Calu3 (cell line): ENCODE measurements at regions of chr22 and their contacts with region 1.

Region 1: DNA sequence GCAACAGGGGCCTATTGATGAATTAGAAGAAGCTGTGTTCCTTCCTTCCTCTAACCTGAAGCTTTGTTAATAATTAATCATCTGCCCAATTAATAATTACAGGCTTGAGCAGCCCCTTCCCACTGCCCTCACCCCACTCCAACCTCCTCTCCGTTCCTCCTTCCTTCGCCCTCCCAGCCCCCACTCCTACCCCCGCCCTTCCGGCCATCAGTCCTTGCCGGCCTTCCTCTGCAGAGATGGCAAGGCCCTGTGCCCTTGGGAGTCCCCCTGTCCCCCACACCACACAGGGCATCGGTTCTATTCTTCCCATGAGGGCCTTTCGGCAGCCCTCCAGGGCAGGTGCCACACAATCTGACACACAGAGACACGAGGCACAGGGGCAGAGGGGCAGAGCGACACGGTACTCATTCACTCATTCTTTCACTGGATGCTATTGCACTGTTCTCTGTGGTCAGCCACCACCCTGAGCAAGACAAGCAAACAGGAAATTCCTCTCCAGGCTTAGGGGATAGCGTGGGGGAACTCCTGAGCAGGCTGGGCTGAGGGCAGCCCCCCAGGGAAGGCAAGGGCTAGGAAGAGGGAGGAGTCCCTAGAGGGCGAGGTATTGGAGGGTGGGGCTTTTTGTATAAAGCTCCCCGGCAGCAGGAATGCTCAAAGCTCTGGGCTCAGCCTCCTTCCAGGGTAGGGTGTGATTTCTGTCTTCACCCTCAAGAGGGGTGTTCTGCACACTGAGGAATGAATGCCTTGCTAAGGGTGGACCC is 14.7 kb downstream of the MGAT3 start:
- DNase-seq: peak; percentile 85
- H3K4me3 Mint-ChIP-seq: peak overlapping the region; percentile 85
- H3K27ac Mint-ChIP-seq: peak overlapping the region; percentile 92
- H3K4me1 Mint-ChIP-seq: peaks cover 67% of the 10 kb centered on the region
- H3K27me3 Mint-ChIP-seq: no peaks in the 10 kb centered on the region
- CTCF ChIP-seq: no peak

Region 2: DNA sequence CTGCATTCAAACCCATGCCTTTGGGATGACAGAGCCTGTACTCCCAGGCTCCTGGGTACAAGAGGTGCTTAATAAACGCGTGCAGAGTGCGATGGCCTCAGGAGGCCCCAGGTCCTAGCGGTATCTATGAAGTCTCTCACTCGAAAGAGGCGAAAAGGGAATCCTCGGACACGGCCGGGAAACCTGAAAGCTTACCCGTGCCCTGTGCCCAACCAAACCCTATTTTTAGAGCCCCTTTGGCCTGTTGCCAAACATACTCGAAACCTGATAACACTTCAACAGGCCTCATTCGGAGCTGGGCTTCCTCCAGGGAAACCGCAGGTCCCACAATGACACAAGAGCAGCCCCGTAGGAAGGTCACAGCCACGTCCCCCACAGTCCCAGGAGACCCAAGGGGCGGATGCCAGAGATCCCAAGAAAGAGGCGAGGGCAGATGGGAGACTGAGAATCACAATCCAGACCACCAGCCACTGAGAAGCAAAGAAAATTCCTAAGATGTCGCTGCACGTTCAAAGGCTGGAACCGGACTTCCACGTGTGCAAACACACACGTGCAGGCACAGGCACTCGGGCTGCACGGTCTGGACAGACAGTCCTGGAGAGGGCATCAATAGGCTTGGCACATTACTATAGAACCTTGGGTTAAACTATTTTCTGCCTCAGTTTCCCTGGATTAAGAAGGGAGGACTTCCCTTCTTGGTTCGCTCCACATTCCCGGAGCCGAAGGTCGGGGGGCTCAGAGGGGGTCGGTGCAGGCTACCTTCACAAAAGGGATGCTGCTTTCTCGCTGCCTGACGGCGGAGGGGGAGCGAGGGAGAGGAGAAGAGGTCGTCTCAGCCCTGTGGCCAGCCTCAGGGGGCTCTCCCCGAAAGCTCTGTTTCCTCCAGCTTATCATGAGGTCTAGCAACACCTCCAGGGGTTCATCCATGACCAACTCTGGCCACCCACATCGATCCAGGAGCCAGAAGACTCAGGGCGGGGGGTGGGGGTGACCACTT is 234.9 kb before region 1 on chr22:
- CTCF ChIA-PET with region 1: no interaction called
- intact Hi-C with region 1: no loop called
- DNase-seq: no peak
- H3K4me3 Mint-ChIP-seq: no peak overlapping the region
- H3K27ac Mint-ChIP-seq: peak overlapping the region; percentile 10
- H3K4me1 Mint-ChIP-seq: peaks cover 66% of the 10 kb centered on the region
- H3K27me3 Mint-ChIP-seq: no peaks in the 10 kb centered on the region
- CTCF ChIP-seq: no peak

Region 3: GRCh38 chr22:39332441-39333064 is 139.0 kb before region 1 on chr22:
- CTCF ChIA-PET with region 1: interaction called, 10 read pairs
- intact Hi-C with region 1: no loop called
- DNase-seq: peak; percentile 55
- H3K4me3 Mint-ChIP-seq: peak overlapping the region; percentile 41
- H3K27ac Mint-ChIP-seq: peak overlapping the region; percentile 83
- H3K4me1 Mint-ChIP-seq: peaks cover 21% of the 10 kb centered on the region
- H3K27me3 Mint-ChIP-seq: no peaks in the 10 kb centered on the region
- CTCF ChIP-seq: no peak

Region 4: DNA sequence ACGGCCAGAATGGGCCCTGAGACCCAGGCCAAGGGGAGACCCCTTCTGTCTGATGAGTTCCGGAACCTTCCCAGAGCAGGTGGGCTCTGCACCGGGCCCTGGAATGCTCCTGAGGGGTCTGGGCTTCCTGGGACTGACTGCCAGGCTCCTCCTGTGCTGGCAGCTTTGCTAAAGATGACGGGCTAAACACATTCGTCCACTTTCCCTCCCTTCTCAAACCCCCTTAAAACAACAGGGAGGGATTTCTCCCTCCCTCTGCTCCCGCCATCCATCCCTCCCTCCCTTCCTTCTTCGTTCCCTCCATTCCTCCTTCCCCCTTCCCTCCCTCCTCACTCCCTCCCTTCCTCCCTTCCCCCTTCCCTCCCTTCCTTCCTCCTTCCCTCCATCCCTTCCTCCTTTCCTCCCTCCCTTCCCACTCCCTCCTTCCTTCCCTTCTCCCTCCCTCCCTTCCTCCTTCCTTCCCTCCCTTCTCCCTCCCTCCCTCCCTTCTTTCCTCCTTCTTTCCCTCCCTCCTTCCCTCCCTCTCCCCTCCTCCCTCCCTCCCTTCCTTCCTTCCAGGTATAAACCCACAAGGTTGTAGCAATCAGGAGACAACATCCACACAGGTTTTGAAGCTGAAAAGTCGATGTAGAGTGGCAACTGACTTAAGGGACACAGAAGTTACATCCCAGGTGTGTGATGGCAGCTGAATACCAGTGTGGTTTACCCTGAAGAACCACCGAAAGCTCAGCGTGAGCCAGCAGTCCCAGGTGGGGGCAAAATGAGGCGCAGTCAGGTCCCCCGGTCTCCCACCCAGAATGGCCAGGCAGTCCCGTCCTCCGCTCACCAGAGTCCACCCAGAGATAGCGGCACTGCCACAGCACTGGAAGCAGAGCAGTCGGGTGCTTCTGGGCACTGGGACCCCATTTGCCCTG is 33.5 kb before region 1 on chr22:
- CTCF ChIA-PET with region 1: interaction called, 13 read pairs
- intact Hi-C with region 1: loop called (anchors 2 kb)
- DNase-seq: no peak
- H3K4me3 Mint-ChIP-seq: no peak overlapping the region
- H3K27ac Mint-ChIP-seq: no peak overlapping the region
- H3K4me1 Mint-ChIP-seq: peaks cover 23% of the 10 kb centered on the region
- H3K27me3 Mint-ChIP-seq: no peaks in the 10 kb centered on the region
- CTCF ChIP-seq: no peak